Transverse colon (tissue), 4 donors: ENCODE measurements at regions of chr4 and their contacts with region 1.

Region 1: GRCh38 chr4:145216535-145216934 is 36.1 kb upstream of the OTUD4 start:
- DNase-seq: no peak
- H3K4me3 ChIP-seq: no peak overlapping the region
- H3K27ac ChIP-seq: no peak overlapping the region
- H3K4me1 ChIP-seq: no peaks in the 10 kb centered on the region
- H3K27me3 ChIP-seq: no peaks in the 10 kb centered on the region
- CTCF ChIP-seq: peak in 4 of 5 experiments; percentile 18 to 38 (median 24)
- EP300 ChIP-seq: no peak
- POLR2A ChIP-seq: no peak

Region 2: GRCh38 chr4:145557720-145558119 is 341.2 kb after region 1 on chr4:
- in situ Hi-C with region 1: loop called in 1 of 4 experiments (anchors 25 kb)
- intact Hi-C with region 1: loop called (anchors 5 kb)
- DNase-seq: peak; percentile 63
- H3K4me3 ChIP-seq: no peak overlapping the region
- H3K27ac ChIP-seq: no peak overlapping the region
- H3K4me1 ChIP-seq: no peaks in the 10 kb centered on the region
- H3K27me3 ChIP-seq: no peaks in the 10 kb centered on the region
- CTCF ChIP-seq: peak; percentile 83 to 87 (median 86)
- EP300 ChIP-seq: no peak
- POLR2A ChIP-seq: no peak

Region 3: DNA sequence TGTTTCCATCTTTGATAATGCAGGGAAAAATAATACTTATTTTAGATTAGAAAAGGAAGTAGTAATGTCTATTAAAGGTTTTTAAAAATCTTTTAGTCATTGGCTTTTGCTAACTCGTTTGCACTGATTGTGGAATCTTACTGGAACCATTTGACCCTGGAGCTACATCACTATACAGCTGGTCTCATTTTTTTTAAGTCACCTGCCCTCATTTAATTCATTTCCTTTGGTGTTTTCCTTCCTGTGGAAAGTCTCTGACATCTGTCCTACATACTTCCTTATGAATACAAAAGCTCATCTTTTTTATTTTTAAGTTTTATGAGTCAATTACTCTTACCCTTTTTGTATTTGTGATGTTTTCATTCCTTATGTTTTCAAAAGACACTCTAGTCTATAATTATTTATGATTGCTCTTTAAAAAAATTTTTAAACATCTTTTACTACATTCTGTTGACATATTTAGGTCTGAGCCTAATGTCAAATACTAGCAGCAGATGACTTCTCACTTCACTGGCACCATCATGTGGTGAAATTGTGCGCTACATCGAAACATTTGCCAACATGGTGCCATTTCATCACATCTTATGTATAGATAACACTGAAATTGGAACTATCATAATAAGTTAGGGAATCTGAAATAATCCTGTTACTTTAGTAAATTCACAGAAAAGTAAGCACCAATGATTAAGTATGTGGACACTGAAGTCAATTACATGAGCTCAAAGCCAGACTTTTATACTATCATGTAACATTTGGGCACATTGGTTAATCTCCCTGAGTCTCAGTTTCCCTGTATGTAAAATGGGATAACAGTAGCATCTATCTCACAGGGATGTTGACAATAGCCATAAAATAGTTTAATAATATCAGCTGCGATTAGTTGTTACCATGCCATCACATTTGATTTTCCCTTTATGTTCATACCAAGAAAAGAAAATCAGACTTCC is 393.2 kb after region 1 on chr4:
- in situ Hi-C with region 1: loop called in 1 of 4 experiments (anchors 10 kb)
- intact Hi-C with region 1: no loop called
- DNase-seq: peak; percentile 69
- H3K4me3 ChIP-seq: no peak overlapping the region
- H3K27ac ChIP-seq: no peak overlapping the region
- H3K4me1 ChIP-seq: no peaks in the 10 kb centered on the region
- H3K27me3 ChIP-seq: no peaks in the 10 kb centered on the region
- CTCF ChIP-seq: peak; percentile 63 to 77 (median 68)
- EP300 ChIP-seq: no peak
- POLR2A ChIP-seq: no peak